Activated CD4-positive, alpha-beta memory T cell treated with anti-CD3 and anti-CD28 coated beads, Interleukin-2, amount 10 ng/mL, durations not matched to agents 7 days and 5 days (primary cell): ENCODE measurements at regions of chr1 and their contacts with region 1.

Region 1: DNA sequence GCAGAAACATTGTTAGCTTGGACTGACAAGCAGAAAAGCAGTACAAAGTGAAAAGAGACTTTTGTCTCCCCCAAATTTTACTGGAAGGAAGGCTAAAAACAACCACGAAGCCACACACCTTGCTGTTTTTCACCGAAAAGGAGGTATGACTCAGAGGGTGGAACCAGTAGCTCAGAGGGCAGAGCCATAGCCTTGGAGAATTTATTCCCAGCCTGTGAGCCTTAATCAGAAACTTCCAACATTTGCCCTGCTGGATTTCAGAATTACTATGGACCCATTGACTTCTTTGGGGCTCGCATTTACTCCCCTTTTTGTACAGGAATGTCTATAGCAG is 32.0 kb downstream of the RPS6KC1 start:
- DNase-seq: peak; percentile 58
- H3K4me3 Mint-ChIP-seq: no peak overlapping the region
- H3K27ac Mint-ChIP-seq: peak overlapping the region; percentile 90
- H3K4me1 Mint-ChIP-seq: peaks cover 40% of the 10 kb centered on the region
- H3K27me3 Mint-ChIP-seq: no peaks in the 10 kb centered on the region

Region 2: DNA sequence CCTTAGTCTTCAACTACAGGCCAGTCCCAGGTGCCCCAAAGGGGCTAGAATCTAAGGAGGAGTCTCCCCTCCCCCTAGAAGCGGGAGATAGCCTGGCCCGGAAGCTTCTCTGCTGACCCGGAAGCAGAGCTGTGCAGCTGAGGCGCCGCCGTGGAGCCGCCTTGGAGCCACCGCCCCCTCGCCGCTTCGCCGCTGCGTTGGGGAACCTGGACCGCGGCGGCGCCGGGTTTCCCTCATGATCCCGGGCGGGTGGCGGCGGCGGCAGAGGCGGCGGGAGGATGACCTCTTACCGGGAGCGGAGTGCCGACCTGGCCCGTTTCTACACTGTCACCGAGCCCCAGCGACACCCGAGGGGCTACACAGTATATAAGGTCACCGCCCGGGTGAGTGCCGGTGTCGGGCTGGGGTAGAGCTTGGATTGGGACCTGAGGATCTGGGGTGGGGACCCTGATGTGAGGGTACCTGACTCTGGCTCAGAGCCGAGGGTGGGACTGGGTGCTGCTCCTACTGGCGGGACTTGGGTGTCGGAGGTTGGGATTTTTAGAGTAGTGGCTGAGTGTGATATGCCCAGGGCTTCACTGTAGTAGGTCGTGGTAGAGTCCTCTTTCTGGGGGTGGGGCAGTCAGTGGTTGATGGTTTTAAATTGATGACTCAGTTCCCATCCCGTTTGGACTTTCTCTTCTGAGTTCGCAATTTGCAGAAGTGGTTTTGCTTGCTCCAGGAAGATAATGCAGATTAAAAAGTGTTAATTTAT is 31.8 kb before region 1 on chr1 and contains the start of gene RPS6KC1:
- CTCF ChIA-PET with region 1: interaction called, 5 read pairs
- POLR2A ChIA-PET with region 1: interaction called, 12 read pairs
- DNase-seq: peak; percentile 86
- H3K4me3 Mint-ChIP-seq: peak within 1 kb of the TSS; percentile 89
- H3K27ac Mint-ChIP-seq: peak within 1 kb of the TSS; percentile 85
- H3K4me1 Mint-ChIP-seq: peaks cover 32% of the 10 kb centered on the region
- H3K27me3 Mint-ChIP-seq: no peaks in the 10 kb centered on the region
- total RNA-seq, gene RPS6KC1: 12.3 to 12.6 TPM